Gastrocnemius medialis (tissue), 4 donors: ENCODE measurements at regions of chr7 and their contacts with region 1.

Region 1: GRCh38 chr7:50595491-50596102 is 30.4 kb upstream of the DDC start:
- DNase-seq: peak in 1 of 2 donors; percentile 65
- ATAC-seq: peak; percentile 46 to 89
- H3K4me3 ChIP-seq: no peak overlapping the region
- H3K27ac ChIP-seq: peak overlapping the region in 3 of 4 donors; percentile 5 to 48 (median 31)
- H3K4me1 ChIP-seq: peaks cover 17 to 25% of the 10 kb centered on the region in 2 donors
- H3K27me3 ChIP-seq: no peaks in the 10 kb centered on the region
- CTCF ChIP-seq: peak; percentile 44 to 64 (median 49)
- POLR2A ChIP-seq: no peak

Region 2: DNA sequence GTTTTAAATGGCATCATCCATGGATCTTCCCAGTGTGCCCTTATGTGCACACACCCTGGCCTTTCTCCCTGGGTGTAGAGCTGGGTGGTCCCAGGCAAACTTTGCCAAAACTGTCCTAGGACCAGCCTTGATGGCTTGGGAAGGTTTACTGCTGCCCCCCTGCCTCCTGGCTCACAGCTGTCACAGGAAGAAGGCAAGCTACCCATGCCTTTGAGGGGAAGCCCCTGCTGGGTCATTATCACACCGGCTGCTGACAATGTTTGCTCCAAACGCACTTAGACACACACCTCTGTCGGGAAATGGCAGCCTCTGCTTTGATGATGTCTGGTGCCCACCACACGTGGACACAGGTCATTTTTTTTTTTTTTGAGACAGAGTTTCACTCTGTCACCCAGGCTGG is 120.3 kb before region 1 on chr7:
- in situ Hi-C with region 1: no loop called
- intact Hi-C with region 1: loop called (anchors 5 kb)
- DNase-seq: no peak
- ATAC-seq: no peak
- H3K4me3 ChIP-seq: no peak overlapping the region
- H3K27ac ChIP-seq: no peak overlapping the region
- H3K4me1 ChIP-seq: peaks cover 8 to 18% of the 10 kb centered on the region in 2 donors
- H3K27me3 ChIP-seq: no peaks in the 10 kb centered on the region
- CTCF ChIP-seq: no peak
- POLR2A ChIP-seq: no peak

Region 3: DNA sequence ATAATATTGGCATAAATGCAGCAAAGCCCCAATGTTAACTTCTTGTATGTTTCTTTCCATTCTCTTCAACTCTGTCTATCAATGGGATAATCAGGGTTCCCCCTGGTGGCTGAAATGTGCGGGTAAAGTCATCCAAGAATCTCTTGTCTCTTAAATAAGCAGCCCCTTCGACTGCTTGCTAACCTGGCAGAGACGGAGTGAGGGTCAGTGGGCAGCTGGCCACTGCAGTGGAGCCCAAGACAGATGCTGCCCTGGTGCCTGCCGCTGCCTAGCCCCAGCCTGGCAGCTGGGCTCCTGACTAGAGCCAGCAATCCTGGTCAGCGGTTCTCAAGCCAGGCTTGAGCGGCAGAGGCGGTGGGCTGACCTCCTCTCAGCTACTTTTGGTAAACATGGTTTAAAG is 472.2 kb after region 1 on chr7:
- in situ Hi-C with region 1: no loop called
- intact Hi-C with region 1: loop called (anchors 10 kb)
- DNase-seq: peak in 1 of 2 donors; percentile 36
- ATAC-seq: peak; percentile 57 to 58
- H3K4me3 ChIP-seq: no peak overlapping the region
- H3K27ac ChIP-seq: no peak overlapping the region
- H3K4me1 ChIP-seq: peaks cover 6 to 8% of the 10 kb centered on the region in 2 donors
- H3K27me3 ChIP-seq: no peaks in the 10 kb centered on the region
- CTCF ChIP-seq: peak; percentile 58 to 77 (median 72)
- POLR2A ChIP-seq: no peak

Region 4: GRCh38 chr7:51482976-51483375 is 887.4 kb after region 1 on chr7:
- in situ Hi-C with region 1: no loop called
- intact Hi-C with region 1: no loop called
- DNase-seq: no peak
- ATAC-seq: no peak
- H3K4me3 ChIP-seq: no peak overlapping the region
- H3K27ac ChIP-seq: no peak overlapping the region
- H3K4me1 ChIP-seq: no peaks in the 10 kb centered on the region
- H3K27me3 ChIP-seq: no peaks in the 10 kb centered on the region
- CTCF ChIP-seq: no peak
- POLR2A ChIP-seq: no peak